PC-3 (cell line): ENCODE measurements at regions of chr10 and their contacts with region 1.

Region 1: GRCh38 chr10:123994417-123995081 is 98.8 kb downstream of the CHST15 start:
- DNase-seq: peak; percentile 93
- ATAC-seq: peak; percentile 66
- H3K4me3 ChIP-seq: peak overlapping the region; percentile 66
- H3K27ac ChIP-seq: peak overlapping the region; percentile 92
- H3K4me1 ChIP-seq: peaks cover 41% of the 10 kb centered on the region
- H3K27me3 ChIP-seq: no peaks in the 10 kb centered on the region
- CTCF ChIP-seq: peak; percentile 82

Region 2: DNA sequence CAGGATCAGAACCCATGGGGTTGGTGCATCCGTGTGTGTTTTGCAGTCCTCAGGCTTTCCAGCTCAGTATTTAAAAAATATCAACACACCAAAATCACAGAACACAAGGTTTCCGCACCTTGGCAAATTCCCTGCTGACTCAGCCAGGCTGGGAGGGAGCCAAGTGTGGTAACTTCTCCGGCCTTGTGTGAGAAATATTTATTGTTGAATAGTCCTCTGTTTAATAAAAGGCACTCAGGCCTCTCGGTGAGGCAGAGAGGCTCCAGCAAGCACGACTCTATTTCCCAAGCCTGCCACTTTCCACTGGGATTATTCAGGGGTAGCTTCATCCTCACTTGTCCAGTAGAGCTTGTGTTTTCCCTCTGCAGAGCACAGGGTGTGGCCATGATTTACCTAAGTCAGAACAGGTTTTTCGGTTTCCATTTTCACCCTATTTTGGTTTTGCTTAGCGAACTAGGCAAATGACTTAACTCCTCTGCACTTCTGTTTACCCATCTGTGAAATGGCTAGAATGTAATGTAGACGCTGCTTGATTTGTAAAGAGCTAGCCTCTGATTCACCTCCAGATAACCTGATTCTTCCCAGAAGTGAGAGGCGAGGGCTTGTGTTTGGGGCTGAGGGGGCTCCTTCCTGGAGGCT is 111.8 kb after region 1 on chr10:
- CTCF ChIA-PET with region 1: interaction called, 5 read pairs
- POLR2A ChIA-PET with region 1: no interaction called
- intact Hi-C with region 1: loop called (anchors 1 kb)
- DNase-seq: peak; percentile 91
- ATAC-seq: peak; percentile 77
- H3K4me3 ChIP-seq: peak overlapping the region; percentile 53
- H3K27ac ChIP-seq: peak overlapping the region; percentile 78
- H3K4me1 ChIP-seq: peaks cover 26% of the 10 kb centered on the region
- H3K27me3 ChIP-seq: no peaks in the 10 kb centered on the region
- CTCF ChIP-seq: no peak

Region 3: GRCh38 chr10:124152916-124153826 is 158.6 kb after region 1 on chr10:
- CTCF ChIA-PET with region 1: interaction called, 4 read pairs
- POLR2A ChIA-PET with region 1: no interaction called
- intact Hi-C with region 1: loop called (anchors 1 kb)
- DNase-seq: peak; percentile 95
- ATAC-seq: peak; percentile 77
- H3K4me3 ChIP-seq: peak overlapping the region; percentile 59
- H3K27ac ChIP-seq: peak overlapping the region; percentile 99
- H3K4me1 ChIP-seq: peaks cover 37% of the 10 kb centered on the region
- H3K27me3 ChIP-seq: no peaks in the 10 kb centered on the region
- CTCF ChIP-seq: no peak

Region 4: DNA sequence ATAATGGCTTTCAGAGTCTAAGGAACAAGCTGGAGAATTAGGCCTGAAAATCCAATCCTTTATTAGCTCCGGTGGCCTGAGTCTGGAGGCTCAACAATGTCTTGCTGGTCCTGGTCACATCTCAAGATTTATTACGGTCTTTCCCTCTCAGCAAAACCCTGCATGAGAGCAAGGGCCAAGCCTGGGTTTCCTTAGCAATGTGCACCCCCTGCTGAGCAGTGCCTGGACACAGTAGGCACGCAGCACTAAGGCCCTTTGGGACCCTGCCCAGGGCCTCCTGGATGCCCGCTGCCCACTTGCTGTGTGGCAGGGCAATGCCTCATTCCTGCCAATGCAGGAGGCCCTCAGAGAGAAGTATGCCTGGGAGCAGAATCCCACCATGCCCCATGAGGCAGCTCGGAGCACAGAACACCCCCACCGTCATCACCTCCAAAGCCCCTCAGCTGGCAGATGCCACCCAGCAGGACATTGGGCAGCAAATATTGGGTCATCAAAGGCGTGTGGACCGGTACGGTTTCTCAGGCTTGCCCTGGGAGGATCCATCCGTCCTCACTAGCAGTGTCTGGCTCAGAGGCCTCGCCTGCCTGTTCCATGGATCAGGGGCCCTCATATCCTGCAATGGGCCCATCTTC is 267.8 kb after region 1 on chr10:
- CTCF ChIA-PET with region 1: no interaction called
- POLR2A ChIA-PET with region 1: no interaction called
- intact Hi-C with region 1: loop called (anchors 1 kb)
- DNase-seq: peak; percentile 5
- ATAC-seq: no peak
- H3K4me3 ChIP-seq: no peak overlapping the region
- H3K27ac ChIP-seq: no peak overlapping the region
- H3K4me1 ChIP-seq: peaks cover 8% of the 10 kb centered on the region; the same call in 1 of the 2 replicates
- H3K27me3 ChIP-seq: peaks cover 16% of the 10 kb centered on the region; the same call in 1 of the 2 replicates
- CTCF ChIP-seq: no peak

Region 5: DNA sequence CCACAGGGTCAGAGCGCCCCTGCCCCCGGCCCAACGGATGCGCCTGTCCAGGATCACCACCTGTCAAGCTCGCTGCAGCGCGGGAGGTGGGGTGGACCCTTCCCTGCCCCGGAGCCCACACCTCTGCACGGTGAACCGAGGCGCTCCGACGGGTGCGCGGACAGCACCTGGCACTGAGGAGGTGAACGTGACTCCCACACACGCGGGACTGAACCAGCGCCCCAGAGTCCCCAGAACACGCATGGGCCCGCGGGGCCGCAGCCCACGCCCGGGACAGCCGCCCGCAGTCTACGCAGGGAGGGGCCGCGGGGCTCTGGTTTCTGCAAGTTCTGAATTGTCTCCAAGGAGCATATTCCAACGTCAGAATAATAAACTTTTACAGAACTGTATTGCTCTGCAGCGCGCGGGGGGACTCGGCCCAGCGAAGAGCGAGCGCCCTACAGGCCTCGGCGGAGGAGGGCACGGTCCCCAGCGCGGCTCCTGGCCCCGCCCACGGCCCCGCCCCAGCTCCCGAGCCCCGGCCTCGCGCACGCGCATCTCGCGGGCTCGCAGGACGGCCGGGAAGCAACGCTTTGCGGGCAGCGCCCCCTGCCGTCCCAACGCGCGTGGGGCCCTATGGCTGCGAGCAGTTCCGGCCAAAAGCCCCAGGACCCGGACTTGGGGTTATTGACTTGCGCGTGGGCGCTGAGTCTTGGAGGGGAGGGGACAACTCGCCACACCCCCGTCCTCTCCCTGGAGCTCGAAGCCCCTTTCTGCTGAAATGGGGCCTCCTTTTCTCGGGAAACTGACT is 394.5 kb after region 1 on chr10:
- CTCF ChIA-PET with region 1: interaction called, 37 read pairs
- POLR2A ChIA-PET with region 1: no interaction called
- intact Hi-C with region 1: loop called (anchors 1 kb)
- DNase-seq: peak; percentile 86
- ATAC-seq: peak; percentile 87
- H3K4me3 ChIP-seq: peak overlapping the region; percentile 67
- H3K27ac ChIP-seq: no peak overlapping the region
- H3K4me1 ChIP-seq: peaks cover 11% of the 10 kb centered on the region; the same call in 1 of the 2 replicates
- H3K27me3 ChIP-seq: no peaks in the 10 kb centered on the region
- CTCF ChIP-seq: peak; percentile 73